ENCODE measurements at regions of chr9 and their contacts with region 1.

Region 1: DNA sequence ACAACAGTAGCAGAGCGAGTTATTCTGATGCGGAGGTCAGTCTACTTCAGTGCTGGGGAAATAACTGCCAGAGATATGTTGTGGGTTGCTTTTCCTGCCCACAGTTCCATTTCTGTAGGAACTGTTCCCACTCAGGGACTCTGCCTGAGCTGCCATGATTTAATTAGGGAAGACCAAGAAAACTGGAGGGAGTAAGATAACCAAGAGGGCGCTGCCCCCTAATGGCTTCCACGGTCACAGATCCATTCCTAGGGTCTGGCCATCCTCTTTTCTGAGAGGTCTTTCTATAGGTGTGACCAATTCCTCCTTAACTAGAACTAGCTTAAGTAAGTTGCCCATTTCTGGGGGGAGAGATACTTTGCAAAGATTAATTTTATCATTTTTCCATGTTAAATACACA is 125.9 kb downstream of the APBA1 start:
- DNase-seq: peak; percentile 23

Region 2: GRCh38 chr9:69421908-69422801 is 124.1 kb before region 1 on chr9:
- CTCF ChIA-PET with region 1: interaction called, 18 read pairs
- POLR2A ChIA-PET with region 1: no interaction called
- DNase-seq: peak; percentile 75

Region 3: DNA sequence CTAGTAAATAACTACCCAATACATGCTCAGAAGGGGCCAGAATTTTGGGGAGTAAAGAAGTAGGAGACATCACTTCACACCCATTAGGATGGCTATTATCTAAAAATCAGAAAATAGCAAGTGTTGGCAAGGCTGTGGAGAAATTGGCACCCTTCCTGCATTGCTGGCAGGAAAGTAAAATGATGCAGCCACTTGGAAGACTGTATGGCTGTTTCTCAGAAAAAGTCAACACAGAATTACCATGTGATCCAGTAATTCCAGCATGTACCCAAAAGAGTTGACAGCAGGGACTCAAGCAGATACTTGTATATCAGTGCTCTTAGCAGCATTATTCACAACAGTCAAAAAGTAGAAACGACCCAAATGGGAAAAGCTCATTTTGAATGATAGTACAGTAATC is 18.3 kb after region 1 on chr9:
- CTCF ChIA-PET with region 1: no interaction called
- POLR2A ChIA-PET with region 1: no interaction called
- DNase-seq: no peak